T-cell (primary cell): ENCODE measurements at regions of chr6 and their contacts with region 1.

Region 1: DNA sequence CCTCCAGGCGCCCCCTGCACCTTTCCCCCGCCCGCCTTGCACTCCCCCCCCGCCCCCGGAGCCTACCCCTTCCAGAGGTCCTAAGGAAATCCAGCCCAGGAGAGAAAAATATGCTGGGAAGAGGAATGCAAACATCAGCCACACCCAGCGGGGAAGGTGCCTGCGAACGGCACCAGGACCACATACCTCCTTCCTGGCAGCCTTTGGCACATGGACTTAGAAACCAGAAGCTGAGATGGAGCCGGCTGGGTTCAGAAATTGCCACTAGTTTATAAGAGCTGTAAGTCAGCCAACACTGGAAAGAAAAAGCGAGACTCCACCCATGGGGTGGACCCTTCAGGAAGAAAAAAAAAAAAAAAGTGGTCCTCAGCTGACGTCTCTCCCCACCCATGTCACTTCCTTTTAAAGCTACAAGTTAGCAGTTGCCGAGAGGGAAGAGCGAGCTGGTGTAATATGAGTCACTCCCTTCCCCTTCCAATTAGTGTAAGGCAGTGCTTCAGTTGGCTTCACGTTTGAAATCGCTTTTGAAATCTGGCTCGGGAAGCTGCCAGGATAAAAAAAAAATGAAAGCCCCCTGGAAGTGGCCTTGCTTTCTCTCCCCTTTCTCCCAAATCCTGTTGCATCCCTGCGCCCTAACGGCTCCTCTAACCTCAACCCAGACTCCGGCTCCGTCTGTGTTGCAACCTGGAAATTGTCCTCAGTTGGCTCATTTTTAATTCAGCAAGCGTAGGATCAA is at the start of gene AGPAT4:
- DNase-seq: peak; percentile 20 to 90 (median 63)
- ATAC-seq: peak; percentile 91 to 97 (median 93)
- H3K4me3 ChIP-seq: peak within 1 kb of the TSS; percentile 61 to 74
- H3K4me3 Mint-ChIP-seq: peak within 1 kb of the TSS; percentile 86 to 97 (median 88)
- H3K27ac ChIP-seq: peak within 1 kb of the TSS; percentile 81
- H3K27ac Mint-ChIP-seq: peak within 1 kb of the TSS; percentile 90 to 91
- H3K4me1 ChIP-seq: peaks cover 8 to 14% of the 10 kb centered on the region in 2 experiments
- H3K4me1 Mint-ChIP-seq: peaks cover 22 to 31% (median 30%) of the 10 kb centered on the region in 3 donors
- H3K27me3 ChIP-seq: no peaks in the 10 kb centered on the region
- H3K27me3 Mint-ChIP-seq: no peaks in the 10 kb centered on the region
- total RNA-seq, gene AGPAT4: 5.6 to 15.0 (median 6.3) TPM

Region 2: DNA sequence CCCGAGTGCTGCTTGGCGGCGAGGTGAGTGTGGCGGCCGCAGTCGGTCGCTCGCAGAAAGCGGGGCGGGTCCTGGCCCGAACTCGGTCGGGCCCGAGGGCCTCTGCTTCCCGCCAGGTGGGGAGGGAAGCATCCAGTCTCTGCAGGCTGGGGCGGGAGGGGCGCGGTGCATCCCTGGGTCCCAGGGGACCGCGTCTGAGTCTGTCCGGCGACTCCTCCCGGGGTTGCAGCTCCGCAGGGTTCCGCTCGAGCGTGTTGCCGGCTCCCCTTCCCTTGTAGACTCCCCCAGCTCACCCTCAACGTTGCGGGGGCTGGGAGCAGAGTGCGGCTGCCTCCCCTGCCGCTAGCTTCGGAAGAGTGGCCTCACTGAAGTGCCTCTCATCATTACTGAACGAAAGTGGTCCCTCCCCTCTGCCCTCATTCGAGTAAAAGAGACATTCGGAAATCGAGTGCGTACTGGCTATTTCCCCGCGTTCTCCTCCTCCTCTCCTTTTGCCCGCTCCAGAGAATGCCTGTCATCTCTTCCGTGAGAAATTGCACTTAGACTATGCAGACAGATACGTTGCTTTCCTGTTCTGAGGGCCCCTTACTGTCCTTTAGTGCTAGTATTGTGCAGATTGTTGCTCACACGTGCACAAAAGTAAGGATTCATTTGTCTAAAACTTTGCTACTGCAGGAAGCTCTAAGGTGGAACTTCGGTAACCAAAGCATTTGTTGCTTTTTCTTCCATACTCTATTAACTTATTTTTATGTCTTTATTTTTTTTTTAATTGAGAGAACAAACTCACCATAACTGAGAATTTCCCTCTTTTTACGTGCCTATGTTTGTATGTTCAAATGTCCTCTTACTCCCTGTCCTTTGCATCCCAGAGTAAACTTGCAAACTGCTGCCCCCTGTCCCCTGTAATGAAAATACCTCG is 281.6 kb before region 1 on chr6:
- CTCF ChIA-PET with region 1: interaction called in 1 of 2 experiments, 5 read pairs
- POLR2A ChIA-PET with region 1: interaction called, 5 to 12 read pairs
- DNase-seq: peak in 33 of 35 experiments; percentile 7 to 68 (median 36)
- ATAC-seq: peak; percentile 45 to 69 (median 52)
- H3K4me3 ChIP-seq: peak overlapping the region; percentile 95 to 98
- H3K4me3 Mint-ChIP-seq: peak overlapping the region; percentile 88 to 97 (median 93)
- H3K27ac ChIP-seq: peak overlapping the region; percentile 88
- H3K27ac Mint-ChIP-seq: peak overlapping the region; percentile 87 to 95
- H3K4me1 ChIP-seq: peaks cover 4 to 16% of the 10 kb centered on the region in 2 experiments
- H3K4me1 Mint-ChIP-seq: peaks cover 46 to 49% (median 47%) of the 10 kb centered on the region in 3 donors
- H3K27me3 ChIP-seq: no peaks in the 10 kb centered on the region
- H3K27me3 Mint-ChIP-seq: peaks cover 0 to 4% of the 10 kb centered on the region in 2 donors

Region 3: DNA sequence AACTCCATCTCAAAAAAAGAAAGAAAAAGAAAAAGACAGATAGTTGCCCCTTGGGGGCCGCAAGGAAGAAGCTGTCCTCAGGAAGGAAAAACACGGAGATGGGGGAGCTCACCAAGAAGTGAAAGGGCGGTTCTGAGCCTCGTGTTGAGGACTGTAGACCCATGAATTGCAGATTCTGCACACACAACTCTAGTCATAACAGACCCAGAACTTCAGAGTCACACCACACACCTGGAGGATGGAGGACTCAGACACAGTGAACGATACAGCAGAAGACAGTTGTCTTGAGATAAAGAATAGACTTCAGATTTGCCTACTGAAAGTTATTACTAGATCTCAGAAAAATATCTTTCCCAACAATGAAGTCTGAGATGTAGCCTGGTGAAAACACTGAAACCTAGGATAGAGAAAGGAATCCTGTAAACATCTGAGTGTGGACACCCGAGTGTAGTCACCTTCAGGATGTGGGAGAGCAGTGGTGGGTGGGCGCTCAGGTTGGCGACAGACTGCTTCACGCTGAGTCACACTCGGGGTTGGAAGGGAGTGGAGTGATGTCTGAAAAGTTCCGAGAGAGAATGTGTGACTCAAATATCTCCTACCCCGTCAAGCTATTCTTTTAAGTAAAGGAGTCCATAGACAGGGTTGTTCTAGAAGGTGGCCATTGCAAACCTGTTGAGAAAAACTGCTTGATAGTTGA is 194.2 kb before region 1 on chr6:
- CTCF ChIA-PET with region 1: interaction called in 1 of 2 experiments, 5 read pairs
- POLR2A ChIA-PET with region 1: interaction called, 7 to 19 read pairs
- DNase-seq: peak in 25 of 35 experiments; percentile 6 to 59 (median 26)
- ATAC-seq: peak; percentile 39 to 74 (median 52)
- H3K4me3 ChIP-seq: no peak overlapping the region
- H3K4me3 Mint-ChIP-seq: peak overlapping the region in 2 of 3 donors; percentile 12 to 29
- H3K27ac ChIP-seq: peak overlapping the region; percentile 87
- H3K27ac Mint-ChIP-seq: no peak overlapping the region
- H3K4me1 ChIP-seq: peaks cover 2 to 53% of the 10 kb centered on the region in 2 experiments
- H3K4me1 Mint-ChIP-seq: peaks cover 0 to 16% (median 11%) of the 10 kb centered on the region in 3 donors
- H3K27me3 ChIP-seq: no peaks in the 10 kb centered on the region
- H3K27me3 Mint-ChIP-seq: no peaks in the 10 kb centered on the region

Region 4: GRCh38 chr6:161200610-161201370 is 73.1 kb before region 1 on chr6:
- CTCF ChIA-PET with region 1: no interaction called
- POLR2A ChIA-PET with region 1: no interaction called
- DNase-seq: no peak
- ATAC-seq: no peak
- H3K4me3 ChIP-seq: no peak overlapping the region
- H3K4me3 Mint-ChIP-seq: no peak overlapping the region
- H3K27ac ChIP-seq: no peak overlapping the region
- H3K27ac Mint-ChIP-seq: no peak overlapping the region
- H3K4me1 ChIP-seq: no peaks in the 10 kb centered on the region
- H3K4me1 Mint-ChIP-seq: peaks cover 0 to 4% (median 2%) of the 10 kb centered on the region in 3 donors
- H3K27me3 ChIP-seq: no peaks in the 10 kb centered on the region
- H3K27me3 Mint-ChIP-seq: no peaks in the 10 kb centered on the region

Region 5: DNA sequence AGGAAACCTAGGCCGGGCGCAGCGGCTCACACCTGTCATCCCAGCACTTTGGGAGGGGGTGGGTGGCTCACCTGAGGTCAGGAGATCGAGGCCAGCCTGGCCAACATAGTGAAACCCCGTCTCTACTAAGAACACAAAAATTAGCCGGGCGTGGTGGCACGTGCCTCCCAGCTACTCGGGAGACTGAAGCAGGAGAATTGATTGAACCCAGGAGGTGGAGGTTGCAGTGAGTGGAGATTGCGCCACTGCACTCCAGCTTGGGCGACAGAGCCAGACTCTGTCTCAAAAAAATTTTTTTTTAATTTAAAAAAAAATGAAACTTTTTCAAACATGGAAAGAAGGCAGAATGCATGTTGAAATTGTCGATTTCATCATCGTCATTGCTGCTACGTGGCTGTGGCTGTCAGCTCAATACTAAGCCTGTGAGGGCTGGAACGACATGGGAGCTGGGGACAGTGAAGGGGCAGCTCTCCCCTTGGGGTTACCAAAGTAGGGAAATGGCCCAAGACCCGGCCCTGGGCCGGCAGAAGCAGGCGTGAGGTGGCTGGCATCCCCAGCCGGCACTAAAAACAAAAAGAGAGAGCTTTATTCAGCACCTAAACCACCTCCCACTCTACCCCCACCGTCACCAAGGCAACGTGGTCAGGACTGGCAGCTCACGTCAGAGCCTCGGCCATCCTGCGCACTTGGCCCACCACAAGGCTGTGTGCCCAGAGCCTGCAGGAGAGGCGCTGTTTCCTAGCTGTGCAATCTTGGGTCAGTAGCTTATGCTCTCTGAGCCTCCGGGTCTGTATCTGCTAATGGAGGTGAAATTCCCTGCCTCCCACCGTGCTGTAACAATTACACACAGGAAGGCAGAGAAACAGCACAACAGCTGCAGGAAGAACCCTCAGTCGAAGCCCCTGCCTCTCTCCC is 30.9 kb before region 1 on chr6:
- CTCF ChIA-PET with region 1: interaction called, 6 to 7 read pairs
- POLR2A ChIA-PET with region 1: interaction called, 3 to 20 read pairs
- DNase-seq: peak in 34 of 35 experiments; percentile 22 to 88 (median 64)
- ATAC-seq: peak in 3 of 4 experiments; percentile 50 to 80 (median 77)
- H3K4me3 ChIP-seq: no peak overlapping the region
- H3K4me3 Mint-ChIP-seq: no peak overlapping the region
- H3K27ac ChIP-seq: peak overlapping the region; percentile 42
- H3K27ac Mint-ChIP-seq: peak overlapping the region in 1 of 2 donors; percentile 21
- H3K4me1 ChIP-seq: peaks cover 0 to 16% of the 10 kb centered on the region in 2 experiments
- H3K4me1 Mint-ChIP-seq: peaks cover 0 to 14% (median 6%) of the 10 kb centered on the region in 3 donors
- H3K27me3 ChIP-seq: no peaks in the 10 kb centered on the region
- H3K27me3 Mint-ChIP-seq: no peaks in the 10 kb centered on the region